ENCODE measurements at regions of chr12 and their contacts with region 1.

Region 1: GRCh38 chr12:8890313-8891085 is 23.8 kb upstream of the PHC1 start:
- DNase-seq: peak; percentile 76
- H3K4me3 ChIP-seq: peak overlapping the region; percentile 50 to 67
- H3K27ac ChIP-seq: no peak overlapping the region
- H3K4me1 ChIP-seq: no peaks in the 10 kb centered on the region
- H3K27me3 ChIP-seq: no peaks in the 10 kb centered on the region
- CTCF ChIP-seq: peak; percentile 93
- EP300 ChIP-seq: no peak
- RAD21 ChIP-seq: peak; percentile 80

Region 2: DNA sequence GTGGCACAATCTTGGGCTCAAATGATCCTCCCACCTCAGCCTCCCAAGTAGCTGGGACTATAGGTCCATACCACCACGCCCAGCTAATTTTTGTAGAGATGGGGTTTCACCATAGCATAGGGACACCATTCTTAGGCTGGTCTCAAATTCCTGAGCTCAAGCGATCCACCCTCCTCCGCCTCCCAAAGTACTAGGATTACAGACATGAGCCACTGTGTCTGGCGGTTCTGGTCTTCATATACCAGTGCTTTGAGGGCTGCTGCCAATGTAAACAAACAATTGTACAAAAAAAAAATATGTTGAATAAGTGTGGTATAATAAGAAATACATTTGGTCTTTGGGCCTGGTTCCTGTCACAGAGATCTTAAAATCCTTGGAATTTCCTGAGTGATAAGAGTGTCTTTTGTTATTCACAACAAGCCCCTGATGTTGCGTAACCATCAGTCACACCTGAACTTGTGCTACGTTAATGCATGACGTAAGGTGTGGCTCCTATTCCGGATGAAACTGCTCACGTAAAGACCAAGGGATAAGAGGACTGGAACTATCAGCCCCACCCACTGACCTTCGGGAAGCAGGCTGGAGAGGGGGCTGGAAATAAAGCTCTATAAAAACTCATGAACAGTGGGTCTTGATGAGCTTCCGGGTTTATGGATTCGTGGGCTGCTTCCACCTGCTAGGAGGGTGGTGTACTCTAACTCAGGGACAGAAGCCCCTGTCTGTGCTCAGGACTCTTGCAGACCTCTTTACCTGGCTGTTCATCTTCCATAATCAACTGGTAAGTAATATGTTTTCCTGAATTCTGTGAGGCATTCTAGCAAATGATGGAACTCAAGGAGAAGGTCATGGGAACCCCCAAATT is 209.2 kb before region 1 on chr12:
- CTCF ChIA-PET with region 1: interaction called, 48 read pairs
- POLR2A ChIA-PET with region 1: interaction called, 4 read pairs
- DNase-seq: no peak
- H3K4me3 ChIP-seq: no peak overlapping the region; a peak in 2 of 4 replicates
- H3K27ac ChIP-seq: no peak overlapping the region
- H3K4me1 ChIP-seq: no peaks in the 10 kb centered on the region; a peak in 1 of 4 replicates
- H3K27me3 ChIP-seq: no peaks in the 10 kb centered on the region
- CTCF ChIP-seq: no peak
- EP300 ChIP-seq: no peak
- RAD21 ChIP-seq: no peak

Region 3: GRCh38 chr12:8823565-8824300 is 66.8 kb before region 1 on chr12:
- CTCF ChIA-PET with region 1: interaction called, 33 read pairs
- POLR2A ChIA-PET with region 1: no interaction called
- DNase-seq: peak; percentile 69
- H3K4me3 ChIP-seq: peak overlapping the region in 1 of 2 experiments; percentile 40; a peak in 1 of 4 replicates
- H3K27ac ChIP-seq: no peak overlapping the region
- H3K4me1 ChIP-seq: no peaks in the 10 kb centered on the region; a peak in 1 of 4 replicates
- H3K27me3 ChIP-seq: no peaks in the 10 kb centered on the region; the same call in 1 of the 2 replicates
- CTCF ChIP-seq: peak; percentile 61
- EP300 ChIP-seq: no peak
- RAD21 ChIP-seq: peak; percentile 88

Region 4: DNA sequence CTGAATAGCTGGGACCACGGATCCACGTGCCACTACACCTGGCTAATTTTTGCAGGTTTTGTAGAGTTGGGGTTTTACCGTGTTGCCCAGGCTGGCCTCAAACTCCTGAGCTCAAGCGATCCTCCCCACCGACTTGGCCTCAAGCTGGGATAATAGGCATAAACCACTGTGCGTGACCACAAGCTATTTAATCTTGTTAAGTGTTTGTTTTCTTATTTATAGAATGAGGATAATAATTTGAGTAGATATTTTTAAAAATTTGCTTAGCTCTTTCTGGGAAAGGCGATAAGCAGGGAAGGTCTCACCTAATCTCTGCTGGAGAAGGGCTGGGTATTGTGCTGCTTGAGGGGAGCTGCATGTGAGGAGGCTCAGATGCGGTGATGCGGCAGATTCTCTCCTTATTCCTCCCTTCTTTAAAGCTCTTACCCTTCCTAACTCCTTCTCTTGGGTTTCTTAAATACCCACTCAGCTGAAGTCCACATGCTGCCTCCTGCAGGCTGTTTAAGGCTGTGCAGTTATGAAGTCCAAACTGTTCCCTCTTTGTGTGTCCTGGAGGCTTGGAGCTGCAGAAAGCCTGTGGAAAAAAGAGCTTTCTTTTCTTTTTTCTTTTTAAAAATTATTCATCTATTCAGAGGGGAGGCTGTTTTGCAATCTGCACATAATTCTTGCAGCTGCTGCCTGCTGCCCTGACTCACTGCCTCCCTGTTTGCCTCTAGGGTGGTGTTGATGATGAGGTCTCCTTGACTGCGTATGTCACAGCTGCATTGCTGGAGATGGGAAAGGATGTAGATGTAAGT is 30.1 kb before region 1 on chr12:
- CTCF ChIA-PET with region 1: interaction called, 21 read pairs
- POLR2A ChIA-PET with region 1: no interaction called
- DNase-seq: peak; percentile 33
- H3K4me3 ChIP-seq: peak overlapping the region in 1 of 2 experiments; percentile 47; a peak in 1 of 4 replicates
- H3K27ac ChIP-seq: no peak overlapping the region
- H3K4me1 ChIP-seq: no peaks in the 10 kb centered on the region
- H3K27me3 ChIP-seq: no peaks in the 10 kb centered on the region; the same call in 1 of the 2 replicates
- CTCF ChIP-seq: peak; percentile 67
- EP300 ChIP-seq: no peak
- RAD21 ChIP-seq: peak; percentile 63

Region 5: GRCh38 chr12:8914716-8915526 is 24.4 kb after region 1 on chr12:
- CTCF ChIA-PET with region 1: interaction called, 26 read pairs
- POLR2A ChIA-PET with region 1: no interaction called
- DNase-seq: peak; percentile 83
- H3K4me3 ChIP-seq: peak overlapping the region; percentile 74 to 89
- H3K27ac ChIP-seq: peak overlapping the region; percentile 83 to 95
- H3K4me1 ChIP-seq: peaks cover 15 to 16% of the 10 kb centered on the region in 2 experiments; a peak in 3 of 4 replicates
- H3K27me3 ChIP-seq: no peaks in the 10 kb centered on the region
- CTCF ChIP-seq: no peak
- EP300 ChIP-seq: no peak
- RAD21 ChIP-seq: no peak

Measured in SK-N-SH (cell line).